Activated T-helper 1 cell treated with anti-CD3 and anti-CD28 coated beads, Interleukin-12 subunit alpha, Interleukin-12 subunit beta, Interleukin-2, Interleukin-4 antibody, amounts not matched to agents 30 ng/mL and 10 ng/mL and 1 ng/mL, durations not matched to agents 14 hours and 24 hours and 36 hours (primary cell): ENCODE measurements at regions of chr2 and their contacts with region 1.

Region 1: DNA sequence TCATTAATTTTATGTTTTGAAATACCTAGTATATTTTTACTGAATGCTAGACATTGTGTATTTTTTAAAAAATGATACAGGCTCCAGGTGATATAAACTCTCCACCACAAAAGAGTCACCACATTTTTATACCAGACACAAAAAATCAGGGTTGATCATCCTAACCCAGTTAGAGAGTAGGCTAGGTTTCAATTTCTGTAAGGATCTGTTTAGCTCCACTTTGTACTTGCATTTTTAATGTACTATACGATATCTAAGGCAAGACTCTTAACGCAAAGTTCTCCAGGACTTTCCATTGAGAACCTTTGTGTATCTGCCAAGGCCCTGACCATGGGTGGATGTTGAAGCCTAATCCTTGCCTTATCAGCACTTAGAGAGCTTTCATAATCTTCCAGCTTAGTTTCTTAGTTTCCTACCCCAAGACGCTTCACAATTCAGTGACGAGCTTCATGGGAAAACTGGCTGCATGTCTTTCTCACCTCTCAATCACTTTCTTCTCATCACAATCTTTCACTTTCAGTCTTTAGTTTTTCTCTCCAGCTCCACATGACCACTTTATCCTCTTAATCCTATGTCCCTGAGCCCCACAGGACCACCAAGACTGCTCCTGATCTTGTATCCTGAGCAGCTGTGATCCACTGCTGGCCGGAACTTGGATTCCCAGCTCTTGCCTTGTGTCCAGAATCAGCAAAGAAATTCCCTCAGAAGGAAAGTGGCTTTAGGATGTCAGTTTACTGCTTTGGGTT is 635.8 kb downstream of the RNF144A start:
- DNase-seq: peak; percentile 8
- H3K4me3 Mint-ChIP-seq: peak overlapping the region; percentile 55
- H3K27ac Mint-ChIP-seq: peak overlapping the region; percentile 46
- H3K4me1 Mint-ChIP-seq: peaks cover 25% of the 10 kb centered on the region
- H3K27me3 Mint-ChIP-seq: no peaks in the 10 kb centered on the region

Region 2: DNA sequence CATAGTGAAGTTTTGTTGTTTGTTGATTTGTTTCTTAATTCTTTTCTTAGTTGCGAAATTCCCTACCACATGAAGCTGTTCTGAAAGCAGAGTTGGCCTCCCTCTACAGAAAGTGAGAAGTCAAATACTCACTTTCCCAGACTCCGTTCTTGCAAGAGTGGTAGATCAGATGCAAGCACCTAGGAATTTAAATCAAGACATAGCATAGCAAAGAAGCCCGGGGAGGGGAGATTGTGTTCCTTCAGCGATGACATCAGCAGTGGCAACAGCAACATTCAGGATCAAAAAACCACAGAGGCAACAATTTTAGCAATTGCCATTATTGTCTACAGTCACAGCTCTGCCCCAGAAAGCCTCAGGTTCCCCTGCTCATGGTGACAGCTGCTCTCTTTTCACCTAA is 55.8 kb before region 1 on chr2:
- intact Hi-C with region 1: no loop called
- DNase-seq: no peak
- H3K4me3 Mint-ChIP-seq: no peak overlapping the region
- H3K27ac Mint-ChIP-seq: no peak overlapping the region
- H3K4me1 Mint-ChIP-seq: peaks cover 31% of the 10 kb centered on the region
- H3K27me3 Mint-ChIP-seq: no peaks in the 10 kb centered on the region

Region 3: GRCh38 chr2:7539760-7540159 is 13.2 kb before region 1 on chr2:
- intact Hi-C with region 1: loop called (anchors 2 kb)
- DNase-seq: no peak
- H3K4me3 Mint-ChIP-seq: no peak overlapping the region
- H3K27ac Mint-ChIP-seq: no peak overlapping the region
- H3K4me1 Mint-ChIP-seq: peaks cover 31% of the 10 kb centered on the region
- H3K27me3 Mint-ChIP-seq: no peaks in the 10 kb centered on the region